Activated T-helper 1 cell treated with anti-CD3 and anti-CD28 coated beads, Interleukin-12 subunit alpha, Interleukin-12 subunit beta, Interleukin-2, Interleukin-4 antibody, amounts not matched to agents 30 ng/mL and 10 ng/mL and 1 ng/mL, durations not matched to agents 14 hours and 24 hours and 36 hours (primary cell): ENCODE measurements at regions of chr1 and their contacts with region 1.

Region 1: DNA sequence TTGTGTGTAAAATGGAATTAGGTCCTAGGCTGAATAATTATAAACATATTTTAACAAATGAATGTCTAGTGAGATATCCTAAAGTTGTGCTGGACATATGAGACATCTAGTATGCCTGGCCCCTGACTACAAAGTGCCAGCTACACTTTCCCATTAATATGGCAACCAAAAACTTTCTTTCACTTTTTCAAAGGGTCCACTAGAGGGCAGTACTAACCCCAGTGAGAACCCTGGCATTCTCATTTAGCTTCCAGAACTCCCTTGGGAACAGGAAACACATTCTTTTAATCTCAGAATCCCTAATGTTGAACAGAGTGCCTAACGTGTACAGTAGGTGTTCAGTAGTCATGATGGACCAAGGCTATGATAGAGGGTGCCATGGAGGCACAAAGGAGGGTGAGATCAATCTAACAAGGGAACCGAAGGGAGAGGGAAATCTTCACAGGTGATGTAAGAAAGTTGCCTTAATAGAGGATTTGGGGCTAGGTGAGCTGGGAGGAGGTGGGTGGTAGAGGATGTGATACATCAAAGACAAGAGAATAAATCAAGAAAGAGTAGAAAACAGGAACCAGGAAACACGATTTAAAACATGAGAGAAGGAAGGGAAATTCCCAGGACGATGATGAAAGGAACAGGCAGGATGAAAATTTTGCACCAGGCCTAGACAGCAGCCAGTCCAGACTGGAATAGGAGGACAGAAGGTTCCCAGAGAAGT is 41.6 kb downstream of the NSL1 start:
- DNase-seq: no peak
- H3K4me3 Mint-ChIP-seq: peak overlapping the region; percentile 8
- H3K27ac Mint-ChIP-seq: peak overlapping the region; percentile 76
- H3K4me1 Mint-ChIP-seq: peaks cover 55% of the 10 kb centered on the region
- H3K27me3 Mint-ChIP-seq: peaks cover 2% of the 10 kb centered on the region

Region 2: DNA sequence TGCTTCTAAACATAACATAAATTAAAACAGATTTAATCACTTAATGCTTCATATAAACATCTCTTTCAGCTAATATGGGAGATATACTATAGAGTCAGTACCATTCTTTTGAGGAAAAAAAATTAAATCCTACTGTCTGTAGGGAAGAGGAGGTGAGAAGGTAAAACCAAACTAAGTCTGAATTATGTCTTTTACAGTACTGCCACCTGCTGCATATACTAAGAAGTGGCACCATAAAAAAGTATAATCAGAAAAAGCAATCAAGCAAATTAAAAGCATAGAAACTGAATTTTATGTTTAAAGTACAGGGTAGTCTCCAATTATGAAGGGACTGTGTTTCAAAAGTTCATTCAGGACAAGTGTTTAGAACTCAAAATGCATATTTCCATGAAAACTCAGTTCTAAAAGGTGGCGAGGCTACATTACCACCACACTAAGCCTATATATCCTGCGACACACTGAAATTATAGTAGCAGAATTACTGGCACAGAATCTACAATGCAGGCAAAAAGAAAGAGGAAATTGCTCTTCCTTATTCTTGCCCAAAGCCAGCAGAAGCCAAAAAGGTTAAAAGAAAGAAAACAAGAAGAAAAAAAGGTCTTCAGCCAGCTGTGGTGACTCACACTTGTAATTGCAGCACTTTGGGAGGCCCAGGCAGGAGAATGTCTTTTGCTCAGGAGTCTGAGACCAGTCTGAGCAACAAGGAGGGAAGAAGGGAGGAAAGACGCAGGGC is 32.6 kb after region 1 on chr1:
- intact Hi-C with region 1: loop called (anchors 1 kb)
- DNase-seq: no peak
- H3K4me3 Mint-ChIP-seq: no peak overlapping the region
- H3K27ac Mint-ChIP-seq: no peak overlapping the region
- H3K4me1 Mint-ChIP-seq: peaks cover 4% of the 10 kb centered on the region
- H3K27me3 Mint-ChIP-seq: no peaks in the 10 kb centered on the region